PC-9 (cell line): ENCODE measurements at regions of chr3 and their contacts with region 1.

Region 1: DNA sequence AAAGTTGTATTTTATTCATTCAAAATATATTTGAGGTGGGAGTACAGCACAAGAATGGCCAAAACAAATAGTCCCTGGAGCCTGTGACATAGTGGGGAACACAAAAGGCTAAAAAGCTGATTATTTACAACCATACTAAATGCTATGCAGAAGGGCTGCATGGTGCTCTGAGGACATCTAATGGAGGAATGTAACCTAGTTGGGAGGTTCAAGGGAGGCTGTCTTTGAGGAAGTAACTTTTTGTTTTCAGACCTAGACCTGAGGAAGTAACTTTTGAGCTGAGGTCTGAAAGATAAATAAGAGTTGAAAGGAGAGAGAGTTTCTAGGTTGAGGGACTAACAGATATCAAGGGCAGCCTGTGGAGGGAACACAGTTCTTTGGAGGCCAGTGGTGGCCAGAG is 34.8 kb upstream of the RASA2 start:
- DNase-seq: peak; percentile 41 to 65
- H3K4me3 ChIP-seq: no peak overlapping the region
- H3K27ac ChIP-seq: no peak overlapping the region
- H3K4me1 ChIP-seq: peaks cover 14% of the 10 kb centered on the region
- H3K27me3 ChIP-seq: no peaks in the 10 kb centered on the region
- CTCF ChIP-seq: peak; percentile 69

Region 2: DNA sequence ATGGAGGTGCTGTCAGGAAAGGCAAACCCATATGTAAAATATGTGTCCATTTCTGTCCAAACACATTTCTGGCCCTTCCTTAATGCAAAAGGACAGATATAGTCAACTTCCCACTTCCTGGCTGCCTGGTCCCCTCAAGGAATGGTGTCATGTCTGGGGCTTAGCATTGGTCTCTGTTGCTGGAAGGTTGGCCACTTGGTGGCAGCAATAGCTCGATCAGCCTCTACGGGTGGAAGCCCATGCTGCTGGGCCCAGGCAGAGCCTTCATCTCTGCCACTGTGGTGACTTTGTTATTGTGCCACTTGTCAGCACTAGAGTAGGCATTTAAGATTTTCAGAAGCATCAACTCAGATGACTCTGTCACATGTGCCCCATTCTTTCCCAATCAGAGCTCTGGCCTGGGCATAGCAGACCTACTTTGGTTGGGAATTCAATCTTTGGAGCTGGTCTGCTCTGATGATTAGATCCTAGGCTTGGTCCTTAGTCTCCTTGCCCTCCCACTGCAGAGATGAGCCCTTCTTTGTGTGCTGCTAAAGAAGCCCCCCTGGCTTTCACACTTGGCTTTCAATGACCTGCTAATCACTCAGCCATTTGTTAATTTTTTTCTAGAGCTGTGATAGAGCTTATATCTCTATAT is 451.9 kb before region 1 on chr3:
- CTCF ChIA-PET with region 1: no interaction called
- POLR2A ChIA-PET with region 1: no interaction called
- intact Hi-C with region 1: loop called (anchors 10 kb)
- DNase-seq: peak in 1 of 2 experiments; percentile 21
- H3K4me3 ChIP-seq: no peak overlapping the region
- H3K27ac ChIP-seq: no peak overlapping the region
- H3K4me1 ChIP-seq: no peaks in the 10 kb centered on the region
- H3K27me3 ChIP-seq: no peaks in the 10 kb centered on the region
- CTCF ChIP-seq: peak; percentile 64

Region 3: GRCh38 chr3:141231101-141231935 is 220.7 kb before region 1 on chr3 and contains the start of gene PXYLP1:
- CTCF ChIA-PET with region 1: interaction called, 7 read pairs
- POLR2A ChIA-PET with region 1: interaction called, 5 read pairs
- intact Hi-C with region 1: loop called (anchors 1 kb)
- DNase-seq: peak; percentile 71 to 98
- H3K4me3 ChIP-seq: peak within 1 kb of the TSS; percentile 88
- H3K27ac ChIP-seq: peak within 1 kb of the TSS; percentile 58
- H3K4me1 ChIP-seq: peaks cover 13% of the 10 kb centered on the region
- H3K27me3 ChIP-seq: no peaks in the 10 kb centered on the region
- CTCF ChIP-seq: peak; percentile 51; the same call in 1 of the 2 replicates
- total RNA-seq, gene PXYLP1: 7.8 and 11.1 TPM in 2 replicates

Region 4: DNA sequence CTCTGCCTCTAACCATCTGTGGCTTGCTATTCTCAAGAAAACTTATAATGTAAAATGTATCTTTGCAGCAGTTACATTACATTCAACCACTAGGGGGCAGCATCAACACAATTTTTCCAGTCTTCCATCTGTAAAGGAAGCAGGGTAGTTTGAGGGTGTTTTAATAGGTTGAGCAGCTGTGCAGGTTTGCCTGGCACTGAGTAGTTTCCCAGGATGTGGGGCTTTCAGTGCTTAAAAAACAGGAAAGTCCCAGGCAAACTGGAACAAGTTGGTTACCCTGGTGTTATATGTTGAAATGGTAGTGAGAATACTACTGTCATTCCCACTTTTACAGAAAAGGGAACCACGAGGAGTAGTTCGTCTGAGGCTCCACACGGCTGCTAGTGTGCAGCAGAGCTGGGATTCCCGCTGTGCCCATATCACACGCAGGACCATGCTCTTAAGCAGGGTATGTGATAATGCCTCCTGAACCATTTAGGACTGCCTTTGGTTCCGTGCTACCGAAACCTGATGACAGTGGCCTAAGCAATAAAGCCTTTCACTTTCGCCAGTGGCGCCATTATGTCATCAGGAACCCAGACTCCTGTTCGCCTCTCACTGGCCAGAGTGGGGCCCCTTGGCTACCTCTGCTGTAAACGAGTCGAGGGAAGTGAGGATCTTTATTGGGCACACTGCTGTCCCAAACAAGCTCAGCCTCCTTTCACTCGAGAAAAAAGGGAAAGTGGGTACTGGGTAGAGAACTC is 148.4 kb before region 1 on chr3:
- CTCF ChIA-PET with region 1: interaction called, 7 read pairs
- POLR2A ChIA-PET with region 1: no interaction called
- intact Hi-C with region 1: loop called (anchors 1 kb)
- DNase-seq: peak; percentile 56
- H3K4me3 ChIP-seq: no peak overlapping the region
- H3K27ac ChIP-seq: no peak overlapping the region
- H3K4me1 ChIP-seq: peaks cover 11% of the 10 kb centered on the region
- H3K27me3 ChIP-seq: no peaks in the 10 kb centered on the region
- CTCF ChIP-seq: peak; percentile 93

Region 5: DNA sequence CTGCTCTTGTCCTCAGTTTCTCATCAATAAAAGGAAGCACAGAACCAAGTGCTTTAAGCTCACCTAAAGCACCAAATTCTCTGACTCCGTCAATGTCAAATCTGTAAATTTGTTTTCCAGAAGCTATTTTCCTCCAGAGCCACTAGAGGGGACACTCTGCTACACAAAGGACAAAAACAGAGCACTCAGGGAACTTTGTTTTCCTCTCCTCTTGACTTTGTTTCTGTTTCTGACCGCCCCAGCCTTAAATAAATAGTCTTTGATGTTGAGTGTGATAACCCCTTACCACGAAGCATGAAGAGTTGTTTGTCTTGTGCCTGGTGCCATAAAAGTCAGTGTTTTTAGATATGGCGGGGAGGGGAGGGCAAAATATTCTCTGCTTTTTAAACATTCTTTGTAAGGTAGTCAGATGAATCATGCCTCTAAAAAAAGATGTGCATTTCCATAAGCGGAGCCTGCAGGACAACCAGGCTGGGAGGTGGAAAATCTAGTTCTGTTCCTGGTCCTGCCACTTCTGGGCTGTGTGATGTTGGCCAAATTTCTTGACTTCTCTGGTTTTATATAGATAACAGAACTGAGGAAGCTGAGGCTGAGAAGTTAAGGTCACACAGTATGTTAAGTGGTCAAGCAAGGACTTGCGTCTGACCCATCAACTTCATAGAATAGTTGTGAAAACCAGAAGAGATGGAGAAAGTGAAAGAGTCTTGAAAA is 91.0 kb before region 1 on chr3:
- CTCF ChIA-PET with region 1: interaction called, 18 read pairs
- POLR2A ChIA-PET with region 1: interaction called, 4 read pairs
- intact Hi-C with region 1: loop called (anchors 1 kb)
- DNase-seq: peak; percentile 59 to 94
- H3K4me3 ChIP-seq: no peak overlapping the region
- H3K27ac ChIP-seq: no peak overlapping the region
- H3K4me1 ChIP-seq: peaks cover 8% of the 10 kb centered on the region
- H3K27me3 ChIP-seq: peaks cover 9% of the 10 kb centered on the region
- CTCF ChIP-seq: peak; percentile 84

Region 6: GRCh38 chr3:141729240-141729639 is 277.2 kb after region 1 on chr3:
- CTCF ChIA-PET with region 1: interaction called, 12 read pairs
- POLR2A ChIA-PET with region 1: no interaction called
- intact Hi-C with region 1: no loop called
- DNase-seq: no peak
- H3K4me3 ChIP-seq: no peak overlapping the region
- H3K27ac ChIP-seq: no peak overlapping the region
- H3K4me1 ChIP-seq: no peaks in the 10 kb centered on the region
- H3K27me3 ChIP-seq: no peaks in the 10 kb centered on the region
- CTCF ChIP-seq: no peak